Activated naive CD4-positive, alpha-beta T cell treated with anti-CD3 and anti-CD28 coated beads for 36 hours (primary cell): ENCODE measurements at regions of chr7 and their contacts with region 1.

Region 1: GRCh38 chr7:127253281-127254162 is 781 bp upstream of the GRM8 start:
- DNase-seq: peak; percentile 61
- H3K4me3 Mint-ChIP-seq: peak overlapping the region; percentile 76
- H3K27ac Mint-ChIP-seq: no peak overlapping the region
- H3K4me1 Mint-ChIP-seq: peaks cover 16% of the 10 kb centered on the region
- H3K27me3 Mint-ChIP-seq: peaks cover 57% of the 10 kb centered on the region

Region 2: GRCh38 chr7:126803060-126803665 is 450.4 kb before region 1 on chr7:
- CTCF ChIA-PET with region 1: interaction called, 8 read pairs
- intact Hi-C with region 1: loop called (anchors 1 kb)
- DNase-seq: peak; percentile 51
- H3K4me3 Mint-ChIP-seq: no peak overlapping the region
- H3K27ac Mint-ChIP-seq: no peak overlapping the region
- H3K4me1 Mint-ChIP-seq: no peaks in the 10 kb centered on the region
- H3K27me3 Mint-ChIP-seq: peaks cover 3% of the 10 kb centered on the region

Region 3: GRCh38 chr7:127107601-127108007 is 145.9 kb before region 1 on chr7:
- CTCF ChIA-PET with region 1: no interaction called
- intact Hi-C with region 1: loop called (anchors 2 kb)
- DNase-seq: peak; percentile 56
- H3K4me3 Mint-ChIP-seq: no peak overlapping the region
- H3K27ac Mint-ChIP-seq: no peak overlapping the region
- H3K4me1 Mint-ChIP-seq: no peaks in the 10 kb centered on the region
- H3K27me3 Mint-ChIP-seq: peaks cover 15% of the 10 kb centered on the region

Region 4: GRCh38 chr7:127404286-127405072 is 151.0 kb after region 1 on chr7:
- CTCF ChIA-PET with region 1: no interaction called
- intact Hi-C with region 1: loop called (anchors 2 kb)
- DNase-seq: no peak
- H3K4me3 Mint-ChIP-seq: peak overlapping the region; percentile 30
- H3K27ac Mint-ChIP-seq: peak overlapping the region; percentile 65
- H3K4me1 Mint-ChIP-seq: peaks cover 23% of the 10 kb centered on the region
- H3K27me3 Mint-ChIP-seq: no peaks in the 10 kb centered on the region

Region 5: DNA sequence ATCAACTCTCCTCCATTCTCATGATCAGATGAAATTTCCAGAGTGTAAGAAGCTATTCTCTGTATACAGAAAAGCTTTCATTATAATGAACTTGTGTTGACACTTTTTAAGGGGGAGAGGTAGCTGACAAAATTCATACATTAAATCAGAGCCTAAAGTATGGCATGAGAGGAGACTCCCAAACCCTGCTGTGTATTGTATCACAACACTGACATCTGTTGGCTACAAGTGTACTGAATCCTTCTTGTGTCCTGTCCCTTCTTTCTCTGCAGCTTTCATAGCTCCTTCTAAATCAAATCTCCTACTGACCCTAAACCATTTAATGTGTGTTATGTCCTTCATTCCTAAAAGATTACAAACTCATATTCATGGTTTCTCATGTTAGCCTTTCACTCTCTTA is 261.0 kb after region 1 on chr7:
- CTCF ChIA-PET with region 1: no interaction called
- intact Hi-C with region 1: loop called (anchors 5 kb)
- DNase-seq: no peak
- H3K4me3 Mint-ChIP-seq: no peak overlapping the region
- H3K27ac Mint-ChIP-seq: no peak overlapping the region
- H3K4me1 Mint-ChIP-seq: no peaks in the 10 kb centered on the region
- H3K27me3 Mint-ChIP-seq: peaks cover 5% of the 10 kb centered on the region